WTC11 (cell line): ENCODE measurements at regions of chr19 and their contacts with region 1.

Region 1: GRCh38 chr19:19224852-19225494 is 13.2 kb downstream of the NCAN start:
- DNase-seq: peak; percentile 90
- ATAC-seq: peak; percentile 86
- H3K4me3 Mint-ChIP-seq: peak overlapping the region; percentile 65
- H3K27ac Mint-ChIP-seq: no peak overlapping the region
- H3K4me1 Mint-ChIP-seq: peaks cover 2% of the 10 kb centered on the region
- H3K27me3 Mint-ChIP-seq: peaks cover 46% of the 10 kb centered on the region
- CTCF ChIP-seq: 0 out of 2 replicates have a peak, but pooled peaks have one; percentile 35

Region 2: DNA sequence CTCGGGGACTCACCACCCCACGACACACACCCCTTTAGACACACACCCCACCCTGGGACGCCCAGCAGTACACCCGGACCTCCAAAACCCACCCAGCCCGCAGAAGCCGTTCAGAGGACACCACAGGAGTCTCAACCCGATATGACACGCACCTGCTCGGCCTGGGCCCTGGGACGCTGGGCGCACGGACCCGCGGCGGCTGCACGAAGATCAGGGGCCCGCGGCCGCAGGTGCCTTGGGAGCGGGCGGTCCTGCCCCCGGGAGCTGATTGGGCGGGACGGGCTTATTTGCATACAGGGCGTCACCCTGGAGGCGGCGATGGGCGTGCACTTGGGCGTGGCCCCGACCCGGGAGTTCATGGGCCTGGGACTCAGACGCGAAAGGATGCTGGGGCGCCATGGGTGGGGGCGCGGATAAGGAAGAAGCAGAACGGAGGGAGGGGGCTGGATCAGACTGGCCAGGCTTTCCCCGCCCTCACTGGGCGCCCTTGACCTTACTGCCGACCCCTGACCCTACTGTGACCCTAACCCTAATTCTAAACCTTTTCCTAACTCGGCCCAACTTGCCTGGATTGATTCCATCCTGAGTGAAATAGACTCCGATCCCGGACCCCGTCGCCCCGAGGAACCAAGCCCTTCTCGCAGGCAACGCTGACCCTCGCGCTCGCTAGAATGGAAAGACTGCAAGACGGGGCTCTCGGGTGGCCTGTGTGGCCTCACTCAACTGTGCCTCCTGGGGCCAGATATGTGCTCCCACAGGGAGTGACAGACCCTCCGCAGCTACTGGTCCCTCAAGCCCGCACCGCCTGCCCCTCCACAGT is 54.7 kb before region 1 on chr19 and contains the start of gene MEF2B:
- CTCF ChIA-PET with region 1: interaction called, 10 read pairs
- POLR2A ChIA-PET with region 1: interaction called, 3 read pairs
- DNase-seq: peak; percentile 97
- ATAC-seq: peak; percentile 93
- H3K4me3 Mint-ChIP-seq: peak within 1 kb of the TSS; percentile 61
- H3K27ac Mint-ChIP-seq: no peak within 1 kb of the TSS
- H3K4me1 Mint-ChIP-seq: peaks cover 15% of the 10 kb centered on the region
- H3K27me3 Mint-ChIP-seq: peaks cover 71% of the 10 kb centered on the region
- CTCF ChIP-seq: no peak
- total RNA-seq, gene MEF2B: 1.3 to 1.7 TPM (median 1.7 TPM) in 3 replicates

Region 3: DNA sequence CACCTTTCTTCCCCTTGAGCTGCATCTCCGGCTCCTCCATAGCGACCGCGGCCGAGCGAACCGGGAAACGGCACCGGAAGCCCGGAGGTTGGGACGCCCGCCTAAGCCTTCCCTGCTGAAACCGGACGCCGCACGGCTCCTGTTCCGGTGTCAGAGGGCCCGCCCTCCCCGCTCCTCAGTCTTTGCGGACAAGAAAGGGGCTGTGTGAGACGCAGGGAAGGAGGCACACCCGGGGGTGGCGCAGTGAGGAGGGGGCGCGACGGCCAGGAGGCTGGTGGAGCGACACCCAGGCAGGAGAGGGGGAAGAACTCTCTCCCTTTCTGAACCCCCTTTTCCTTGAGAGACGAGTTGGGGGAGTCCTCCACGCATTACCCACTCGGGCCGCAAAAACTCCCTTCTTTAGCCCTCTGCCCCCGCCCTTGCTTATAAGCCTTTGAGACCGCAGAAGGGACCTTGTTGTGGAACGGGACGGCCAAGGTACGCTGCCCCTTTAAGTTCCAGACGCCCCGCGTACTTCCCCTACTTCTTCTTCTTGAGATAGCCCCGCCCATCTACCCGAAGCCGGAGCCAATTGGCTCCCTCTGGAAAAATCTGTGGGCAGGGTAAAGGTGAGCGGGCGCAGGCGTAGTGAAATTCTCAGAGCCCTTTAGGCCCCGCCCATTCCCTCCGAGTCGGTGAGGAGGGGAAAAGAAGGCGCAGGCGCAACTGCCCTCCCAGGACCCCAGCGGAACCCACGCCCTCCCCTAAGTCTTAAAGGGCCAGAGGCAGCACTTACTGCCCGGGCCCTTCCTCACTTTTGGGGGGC is 32.7 kb before region 1 on chr19 and contains the starts of genes BORCS8 and RFXANK:
- CTCF ChIA-PET with region 1: interaction called, 12 read pairs
- POLR2A ChIA-PET with region 1: no interaction called
- DNase-seq: peak; percentile 100
- ATAC-seq: peak; percentile 93
- H3K4me3 Mint-ChIP-seq: peak within 1 kb of the TSS; percentile 96
- H3K27ac Mint-ChIP-seq: peak within 1 kb of the TSS; percentile 97
- H3K4me1 Mint-ChIP-seq: peaks cover 15% of the 10 kb centered on the region; the same call in 1 of the 2 replicates
- H3K27me3 Mint-ChIP-seq: no peaks in the 10 kb centered on the region
- CTCF ChIP-seq: no peak
- total RNA-seq, gene BORCS8: 18.4 to 24.2 TPM (median 20.9 TPM) in 3 replicates
- total RNA-seq, gene RFXANK: 78.1 to 87.1 TPM (median 78.7 TPM) in 3 replicates

Region 4: DNA sequence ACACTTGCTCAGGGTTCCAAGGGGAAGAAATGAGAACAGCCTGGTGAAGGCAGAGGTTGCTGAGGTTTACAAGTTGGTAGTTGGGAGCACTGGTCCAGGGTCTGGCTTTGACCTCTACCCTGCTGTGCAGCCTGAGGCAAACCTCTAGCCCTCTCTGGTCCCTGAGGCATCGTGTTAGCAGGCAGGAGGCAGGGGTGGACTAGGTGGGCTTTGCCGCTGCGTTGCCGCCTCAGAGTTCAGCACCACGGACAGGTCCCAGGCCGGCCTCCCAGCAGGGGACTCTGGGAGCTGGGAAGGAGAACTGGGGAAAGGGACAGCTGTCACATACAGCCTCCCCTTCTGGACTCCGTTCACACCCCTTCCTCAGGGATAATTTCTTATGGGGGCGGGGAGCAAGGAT is 10.1 kb before region 1 on chr19:
- CTCF ChIA-PET with region 1: interaction called, 29 read pairs
- POLR2A ChIA-PET with region 1: no interaction called
- DNase-seq: peak; percentile 93
- ATAC-seq: peak; percentile 51
- H3K4me3 Mint-ChIP-seq: no peak overlapping the region
- H3K27ac Mint-ChIP-seq: no peak overlapping the region
- H3K4me1 Mint-ChIP-seq: peaks cover 14% of the 10 kb centered on the region
- H3K27me3 Mint-ChIP-seq: peaks cover 72% of the 10 kb centered on the region
- CTCF ChIP-seq: no peak

Region 5: DNA sequence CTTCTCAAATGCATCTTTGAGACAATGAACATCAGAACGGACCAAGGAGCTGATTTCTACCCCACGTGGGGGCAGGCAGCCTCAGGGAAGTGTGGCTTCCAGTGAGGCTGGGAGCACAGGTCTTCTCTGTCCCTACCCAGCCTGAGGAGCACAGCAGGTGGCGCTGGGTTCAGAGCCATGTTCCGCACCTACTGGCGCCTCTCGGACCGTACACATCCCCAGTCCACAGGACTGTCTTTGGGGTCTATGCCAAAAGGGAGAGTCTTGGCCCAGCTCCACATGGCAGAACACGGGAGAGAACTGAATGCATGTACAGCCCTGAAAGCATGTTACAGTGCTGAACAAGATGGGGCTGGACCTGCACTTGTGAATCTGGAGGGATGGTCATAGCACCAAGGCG is 72.8 kb after region 1 on chr19:
- CTCF ChIA-PET with region 1: no interaction called
- POLR2A ChIA-PET with region 1: no interaction called
- DNase-seq: no peak
- ATAC-seq: no peak; the same call in 1 of the 2 replicates
- H3K4me3 Mint-ChIP-seq: no peak overlapping the region
- H3K27ac Mint-ChIP-seq: no peak overlapping the region
- H3K4me1 Mint-ChIP-seq: no peaks in the 10 kb centered on the region
- H3K27me3 Mint-ChIP-seq: no peaks in the 10 kb centered on the region
- CTCF ChIP-seq: no peak